Tibial artery (tissue), 4 donors: ENCODE measurements at regions of chr1 and their contacts with region 1.

Region 1: GRCh38 chr1:179081687-179082332 is at the start of gene TOR3A:
- DNase-seq: peak; percentile 94 to 96
- H3K4me3 ChIP-seq: peak within 1 kb of the TSS; percentile 63 to 71
- H3K27ac ChIP-seq: peak within 1 kb of the TSS; percentile 77 to 82
- H3K4me1 ChIP-seq: peaks cover 0 to 25% (median 18%) of the 10 kb centered on the region in 4 donors
- H3K27me3 ChIP-seq: no peaks in the 10 kb centered on the region
- CTCF ChIP-seq: peak in 1 of 2 experiments; percentile 18

Region 2: DNA sequence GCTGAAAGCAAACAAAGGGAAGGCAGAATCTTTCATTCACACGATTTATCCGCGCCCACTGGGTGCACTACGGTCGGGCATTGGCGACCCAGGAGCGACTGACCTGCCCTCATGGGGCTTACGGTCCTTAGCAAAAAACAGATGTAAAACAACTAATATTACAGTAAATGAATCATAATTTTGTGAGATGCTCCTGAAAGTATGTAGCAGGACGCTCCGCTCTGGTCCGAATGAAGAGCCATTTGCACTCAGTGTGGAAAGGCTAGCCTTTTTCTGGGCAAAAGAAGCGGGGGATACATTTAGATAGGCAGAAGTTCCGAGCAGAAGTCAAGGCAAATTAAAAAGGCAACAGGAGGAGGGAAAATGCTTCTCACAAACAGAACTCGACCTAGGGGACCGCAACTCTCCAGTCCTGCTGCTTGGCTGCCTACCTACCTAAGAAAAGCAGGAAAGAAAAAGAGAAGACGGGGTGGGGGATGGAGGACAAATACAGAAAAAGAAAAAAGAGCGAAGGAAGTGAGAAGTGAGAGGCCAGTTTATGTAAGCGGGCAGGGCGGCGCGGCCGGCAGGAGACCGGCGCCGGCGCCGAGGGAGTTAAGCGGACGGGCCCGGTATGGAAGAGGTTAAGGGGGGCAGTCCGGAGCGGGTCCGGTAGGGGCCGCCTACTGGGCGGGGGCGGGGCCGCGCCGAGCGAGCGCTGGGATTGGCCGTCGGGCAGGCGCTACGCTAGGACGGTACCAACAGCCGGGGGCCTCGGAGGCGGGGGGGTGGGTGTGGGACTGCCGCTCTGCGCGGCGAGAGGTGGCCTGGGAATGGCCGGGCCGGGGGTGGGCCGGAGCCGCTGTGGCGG is 56.5 kb before region 1 on chr1 and contains the start of gene FAM20B:
- intact Hi-C with region 1: loop called (anchors 5 kb)
- DNase-seq: peak; percentile 91 to 97
- H3K4me3 ChIP-seq: peak within 1 kb of the TSS; percentile 76 to 88
- H3K27ac ChIP-seq: peak within 1 kb of the TSS; percentile 89 to 93
- H3K4me1 ChIP-seq: peaks cover 0 to 33% (median 12%) of the 10 kb centered on the region in 4 donors
- H3K27me3 ChIP-seq: no peaks in the 10 kb centered on the region
- CTCF ChIP-seq: no peak

Region 3: DNA sequence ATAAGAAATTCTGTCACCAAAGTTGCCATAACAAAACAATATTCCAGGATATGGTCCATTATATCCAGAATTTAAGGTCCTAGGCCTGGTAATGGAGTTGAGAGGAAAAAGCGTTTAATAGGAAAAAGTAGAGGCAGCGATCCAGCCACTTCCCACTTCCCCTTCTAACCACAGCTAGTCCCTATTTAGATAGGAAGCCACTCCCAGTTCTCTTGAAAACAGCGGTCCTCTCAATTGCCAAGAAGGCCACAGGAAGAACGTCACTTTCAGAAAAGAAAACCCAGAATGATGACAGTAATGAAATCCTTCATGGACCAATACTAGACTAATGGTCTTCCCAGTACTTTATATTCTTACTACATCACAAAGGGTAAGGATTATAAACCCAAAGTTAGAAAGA is 109.1 kb after region 1 on chr1:
- intact Hi-C with region 1: loop called (anchors 2 kb)
- DNase-seq: no peak
- H3K4me3 ChIP-seq: no peak overlapping the region
- H3K27ac ChIP-seq: peak overlapping the region in 1 of 2 donors; percentile 29
- H3K4me1 ChIP-seq: peaks cover 0 to 8% (median 2%) of the 10 kb centered on the region in 4 donors
- H3K27me3 ChIP-seq: no peaks in the 10 kb centered on the region
- CTCF ChIP-seq: no peak

Region 4: GRCh38 chr1:179293340-179294327 is 211.8 kb after region 1 on chr1 and contains the start of gene SOAT1:
- intact Hi-C with region 1: loop called (anchors 2 kb)
- DNase-seq: peak; percentile 93 to 96
- H3K4me3 ChIP-seq: peak within 1 kb of the TSS; percentile 61 to 85
- H3K27ac ChIP-seq: peak within 1 kb of the TSS; percentile 80 to 98
- H3K4me1 ChIP-seq: peaks cover 0 to 21% (median 15%) of the 10 kb centered on the region in 4 donors
- H3K27me3 ChIP-seq: no peaks in the 10 kb centered on the region
- CTCF ChIP-seq: no peak

Region 5: DNA sequence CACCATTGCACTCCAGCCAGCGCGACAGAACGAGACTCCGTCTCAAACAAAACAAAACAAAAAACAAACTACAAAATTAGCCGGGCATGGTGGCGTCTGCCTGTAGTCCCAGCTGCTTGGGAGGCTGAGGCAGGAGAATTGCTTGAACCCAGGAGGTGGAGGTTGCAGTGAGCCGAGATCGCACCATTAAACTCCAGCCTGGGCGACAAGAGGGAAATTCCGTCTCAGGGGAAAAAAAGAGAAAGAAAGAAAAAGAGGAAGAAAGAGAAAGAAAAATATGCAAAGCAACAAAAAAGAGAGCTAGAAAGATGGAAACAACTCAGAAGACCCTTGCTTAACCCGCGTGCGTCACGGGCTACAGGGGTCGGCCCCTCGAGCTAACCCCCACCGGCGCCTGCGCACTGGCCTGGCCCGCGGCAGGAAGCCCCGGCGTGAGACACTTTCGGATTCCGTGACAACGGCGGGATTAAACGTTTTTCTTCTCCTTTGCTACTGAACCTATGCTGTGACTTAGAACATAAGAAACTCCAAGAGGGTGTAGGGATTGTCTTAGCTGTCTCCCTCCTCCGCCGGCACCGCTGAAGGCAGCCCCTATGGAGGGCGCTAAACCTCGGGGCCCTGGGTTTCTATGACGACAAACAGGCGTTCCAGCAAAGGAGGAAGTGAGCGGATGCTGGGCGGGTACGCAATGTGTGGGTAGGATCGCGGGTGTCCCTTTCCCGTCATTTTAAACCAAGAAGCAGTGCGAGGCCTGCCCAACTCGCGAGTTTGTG is 283.7 kb after region 1 on chr1 and contains the start of gene AXDND1:
- intact Hi-C with region 1: loop called (anchors 2 kb)
- DNase-seq: peak; percentile 87 to 88
- H3K4me3 ChIP-seq: peak within 1 kb of the TSS; percentile 57 to 84
- H3K27ac ChIP-seq: peak within 1 kb of the TSS; percentile 85 to 92
- H3K4me1 ChIP-seq: peaks cover 0 to 16% (median 8%) of the 10 kb centered on the region in 4 donors
- H3K27me3 ChIP-seq: no peaks in the 10 kb centered on the region
- CTCF ChIP-seq: peak in 1 of 2 experiments; percentile 5